ENCODE measurements at regions of chr1 and their contacts with region 1.

Region 1: DNA sequence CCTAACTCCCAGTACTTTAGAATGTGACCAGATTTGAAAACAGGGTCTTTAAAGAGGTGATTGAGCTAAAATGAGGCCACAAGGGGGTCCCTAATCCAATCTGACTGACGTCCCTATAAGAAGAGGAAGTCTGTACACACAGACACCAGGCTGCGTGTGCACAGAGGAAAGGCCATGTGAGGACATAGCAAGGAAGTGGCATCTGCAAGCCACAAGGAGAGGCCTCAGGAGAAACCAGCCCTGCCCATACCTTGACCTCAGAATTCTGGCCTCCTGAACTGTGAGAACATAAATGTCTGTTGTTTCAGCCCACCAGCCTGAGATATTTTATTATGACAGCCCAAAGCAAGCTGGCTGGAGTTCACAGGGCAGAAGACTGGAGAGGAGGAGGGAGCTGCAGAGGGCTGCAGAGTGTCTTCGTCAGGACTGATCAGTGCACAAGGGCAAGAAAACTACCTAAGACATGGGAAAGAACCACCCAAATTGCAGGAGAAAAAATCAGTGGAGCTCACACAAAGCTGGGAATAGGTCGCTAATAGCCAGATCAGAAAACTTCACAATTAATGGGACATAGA is 14.0 kb upstream of the WNT9A start:
- DNase-seq: no peak
- H3K4me3 ChIP-seq: no peak overlapping the region
- H3K4me3 Mint-ChIP-seq: no peak overlapping the region
- H3K27ac Mint-ChIP-seq: no peak overlapping the region
- H3K4me1 ChIP-seq: no peaks in the 10 kb centered on the region
- H3K4me1 Mint-ChIP-seq: no peaks in the 10 kb centered on the region
- H3K27me3 ChIP-seq: no peaks in the 10 kb centered on the region
- H3K27me3 Mint-ChIP-seq: peaks cover 9% of the 10 kb centered on the region
- CTCF ChIP-seq: no peak

Region 2: DNA sequence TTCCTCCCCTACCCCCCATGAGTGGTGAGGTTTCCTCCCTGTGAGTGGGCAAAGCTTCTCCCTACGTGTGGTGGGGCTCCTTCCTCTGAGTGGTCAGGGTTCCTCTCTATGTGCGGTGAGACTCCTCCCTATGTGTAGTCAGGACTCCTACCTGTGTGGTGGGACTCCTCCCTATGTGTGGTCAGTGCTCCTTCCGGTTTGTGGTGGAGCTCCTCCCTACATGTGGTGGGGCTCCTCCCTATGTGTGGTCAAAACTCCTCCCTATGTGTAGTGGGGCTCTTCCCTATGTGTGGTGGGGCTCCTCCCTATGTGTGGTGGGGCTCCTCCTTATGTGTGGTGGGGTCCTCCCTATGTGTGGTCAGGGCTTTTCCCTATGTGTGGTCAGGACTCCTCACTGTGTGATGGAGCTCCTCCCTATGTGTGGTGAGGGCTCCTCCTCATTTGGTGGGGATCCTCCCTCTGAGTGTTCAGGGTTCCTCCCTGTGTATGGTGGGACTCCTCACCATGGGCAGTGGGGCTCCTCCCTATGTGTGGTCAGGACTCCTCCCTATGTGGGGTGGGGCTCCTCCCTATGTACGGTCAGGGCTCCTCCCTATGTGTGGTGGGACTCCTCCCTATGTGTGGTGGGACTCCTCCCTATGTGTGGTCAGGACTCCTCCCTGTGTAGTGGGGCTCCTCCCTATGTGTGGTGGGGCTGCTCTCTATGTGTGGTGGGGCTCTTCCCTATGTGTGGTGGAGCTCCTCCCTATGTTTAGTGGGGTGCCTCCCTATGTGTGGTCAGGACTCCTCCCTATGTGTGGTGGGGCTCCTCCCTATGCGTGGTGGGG is 117.2 kb before region 1 on chr1:
- CTCF ChIA-PET with region 1: no interaction called
- POLR2A ChIA-PET with region 1: no interaction called
- intact Hi-C with region 1: no loop called
- DNase-seq: no peak
- H3K4me3 ChIP-seq: no peak overlapping the region
- H3K4me3 Mint-ChIP-seq: no peak overlapping the region
- H3K27ac Mint-ChIP-seq: no peak overlapping the region
- H3K4me1 ChIP-seq: peaks cover 11% of the 10 kb centered on the region
- H3K4me1 Mint-ChIP-seq: peaks cover 12% of the 10 kb centered on the region
- H3K27me3 ChIP-seq: no peaks in the 10 kb centered on the region
- H3K27me3 Mint-ChIP-seq: no peaks in the 10 kb centered on the region
- CTCF ChIP-seq: no peak

Region 3: DNA sequence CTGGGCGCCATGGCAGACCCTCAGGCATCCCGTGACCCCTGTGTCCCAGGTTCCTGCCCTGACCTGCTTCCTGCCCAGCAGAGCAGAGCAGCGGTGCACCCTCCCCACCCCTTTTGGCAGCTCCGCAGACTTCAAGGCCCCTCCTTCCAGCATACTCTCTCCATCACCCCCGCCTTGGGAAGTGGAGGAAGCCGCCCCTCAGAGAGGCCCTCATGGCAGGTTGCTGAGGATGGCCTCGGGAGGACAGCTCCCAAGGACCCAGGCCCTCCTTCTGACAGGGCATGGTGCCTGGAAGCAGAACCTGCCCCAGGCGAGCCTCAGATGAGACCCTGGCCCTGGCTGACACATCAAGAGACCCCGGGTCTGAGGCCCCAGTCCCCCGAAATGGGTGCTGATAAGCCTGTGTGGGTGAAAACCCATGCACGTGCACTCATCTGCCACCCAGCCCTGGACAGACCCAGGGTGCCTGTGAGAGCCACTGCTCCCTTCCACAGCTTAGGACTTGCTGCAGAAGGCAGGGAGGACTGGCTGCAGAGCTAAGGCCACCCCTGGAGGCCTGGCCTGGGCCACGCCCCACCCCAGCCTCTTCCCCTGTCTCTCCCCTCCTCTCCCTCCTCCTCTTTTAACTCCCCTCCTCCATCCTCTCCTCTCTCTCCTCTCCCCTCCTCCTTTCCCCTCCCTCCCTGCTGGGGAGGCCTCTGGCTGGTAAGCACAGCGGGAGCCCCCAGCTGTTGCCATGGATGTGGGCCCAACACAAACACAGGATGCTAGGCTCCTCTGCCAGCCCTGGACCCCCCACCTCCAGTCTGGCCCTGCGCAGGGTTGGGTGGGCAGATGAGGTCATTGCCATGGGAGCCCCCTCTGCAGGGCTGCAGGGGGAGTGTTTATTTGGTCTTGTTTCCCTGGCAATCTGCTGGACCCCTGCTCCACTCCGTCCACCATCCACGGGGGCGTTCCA is 47.7 kb before region 1 on chr1:
- CTCF ChIA-PET with region 1: no interaction called
- POLR2A ChIA-PET with region 1: no interaction called
- intact Hi-C with region 1: no loop called
- DNase-seq: no peak
- H3K4me3 ChIP-seq: no peak overlapping the region
- H3K4me3 Mint-ChIP-seq: no peak overlapping the region
- H3K27ac Mint-ChIP-seq: no peak overlapping the region
- H3K4me1 ChIP-seq: no peaks in the 10 kb centered on the region
- H3K4me1 Mint-ChIP-seq: peaks cover 10% of the 10 kb centered on the region
- H3K27me3 ChIP-seq: no peaks in the 10 kb centered on the region
- H3K27me3 Mint-ChIP-seq: peaks cover 4% of the 10 kb centered on the region
- CTCF ChIP-seq: no peak

Region 4: GRCh38 chr1:227934476-227935313 is 27.0 kb before region 1 on chr1:
- CTCF ChIA-PET with region 1: no interaction called
- POLR2A ChIA-PET with region 1: no interaction called
- intact Hi-C with region 1: no loop called
- DNase-seq: peak in 1 of 2 experiments; percentile 46
- H3K4me3 ChIP-seq: no peak overlapping the region
- H3K4me3 Mint-ChIP-seq: no peak overlapping the region
- H3K27ac Mint-ChIP-seq: no peak overlapping the region
- H3K4me1 ChIP-seq: no peaks in the 10 kb centered on the region
- H3K4me1 Mint-ChIP-seq: peaks cover 6% of the 10 kb centered on the region
- H3K27me3 ChIP-seq: no peaks in the 10 kb centered on the region
- H3K27me3 Mint-ChIP-seq: peaks cover 4% of the 10 kb centered on the region
- CTCF ChIP-seq: no peak

Region 5: GRCh38 chr1:228013935-228014930 is 52.5 kb after region 1 on chr1:
- CTCF ChIA-PET with region 1: no interaction called
- POLR2A ChIA-PET with region 1: no interaction called
- intact Hi-C with region 1: no loop called
- DNase-seq: no peak
- H3K4me3 ChIP-seq: no peak overlapping the region
- H3K4me3 Mint-ChIP-seq: no peak overlapping the region
- H3K27ac Mint-ChIP-seq: no peak overlapping the region
- H3K4me1 ChIP-seq: 0 out of 2 replicates have a peak, but pooled peaks cover under 1% of the 10 kb centered on the region
- H3K4me1 Mint-ChIP-seq: no peaks in the 10 kb centered on the region
- H3K27me3 ChIP-seq: no peaks in the 10 kb centered on the region
- H3K27me3 Mint-ChIP-seq: peaks cover 14% of the 10 kb centered on the region
- CTCF ChIP-seq: no peak

Region 6: GRCh38 chr1:228059634-228060457 is 98.1 kb after region 1 on chr1:
- CTCF ChIA-PET with region 1: interaction called, 11 read pairs
- POLR2A ChIA-PET with region 1: no interaction called
- intact Hi-C with region 1: no loop called
- DNase-seq: peak; percentile 96 to 99
- H3K4me3 ChIP-seq: peak overlapping the region; percentile 60
- H3K4me3 Mint-ChIP-seq: peak overlapping the region; percentile 73
- H3K27ac Mint-ChIP-seq: no peak overlapping the region
- H3K4me1 ChIP-seq: no peaks in the 10 kb centered on the region
- H3K4me1 Mint-ChIP-seq: no peaks in the 10 kb centered on the region
- H3K27me3 ChIP-seq: no peaks in the 10 kb centered on the region; the same call in 1 of the 2 replicates
- H3K27me3 Mint-ChIP-seq: peaks cover 20% of the 10 kb centered on the region
- CTCF ChIP-seq: no peak